WTC11 (cell line): ENCODE measurements at regions of chr10 and their contacts with region 1.

Region 1: DNA sequence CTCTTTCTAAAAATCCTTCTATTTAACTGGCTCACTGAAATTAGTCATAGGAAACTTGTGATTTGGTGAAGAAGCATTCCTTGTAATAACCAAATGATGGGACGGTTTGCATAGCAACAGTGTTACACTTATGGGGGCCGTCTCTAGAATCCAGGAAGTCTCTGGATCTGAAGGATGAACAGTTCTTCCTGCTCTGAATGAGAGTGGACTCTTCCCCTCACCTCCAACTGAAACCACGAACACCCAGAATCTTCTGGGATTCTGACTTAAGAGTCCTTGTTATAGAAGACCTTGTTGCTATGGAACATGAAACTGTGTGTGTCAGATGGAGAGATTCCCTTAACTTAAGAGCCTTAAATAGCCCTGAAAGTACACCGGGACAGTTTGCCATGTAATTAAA is 23.2 kb downstream of the NOLC1 start:
- DNase-seq: no peak
- ATAC-seq: no peak
- H3K4me3 Mint-ChIP-seq: no peak overlapping the region
- H3K27ac Mint-ChIP-seq: no peak overlapping the region
- H3K4me1 Mint-ChIP-seq: no peaks in the 10 kb centered on the region
- H3K27me3 Mint-ChIP-seq: peaks cover 12% of the 10 kb centered on the region
- CTCF ChIP-seq: no peak

Region 2: GRCh38 chr10:101120884-101121653 is 1054.3 kb before region 1 on chr10:
- CTCF ChIA-PET with region 1: no interaction called
- POLR2A ChIA-PET with region 1: interaction called, 10 read pairs
- DNase-seq: no peak
- ATAC-seq: no peak
- H3K4me3 Mint-ChIP-seq: peak overlapping the region; percentile 72
- H3K27ac Mint-ChIP-seq: no peak overlapping the region
- H3K4me1 Mint-ChIP-seq: peaks cover 20% of the 10 kb centered on the region
- H3K27me3 Mint-ChIP-seq: peaks cover 98% of the 10 kb centered on the region
- CTCF ChIP-seq: no peak

Region 3: GRCh38 chr10:102131690-102132089 is 43.7 kb before region 1 on chr10:
- CTCF ChIA-PET with region 1: no interaction called
- POLR2A ChIA-PET with region 1: no interaction called
- DNase-seq: no peak
- ATAC-seq: no peak
- H3K4me3 Mint-ChIP-seq: peak overlapping the region; percentile 89
- H3K27ac Mint-ChIP-seq: no peak overlapping the region
- H3K4me1 Mint-ChIP-seq: peaks cover 22% of the 10 kb centered on the region
- H3K27me3 Mint-ChIP-seq: peaks cover 4% of the 10 kb centered on the region; the same call in 1 of the 2 replicates
- CTCF ChIP-seq: no peak